Activated CD4-positive, alpha-beta memory T cell treated with anti-CD3 and anti-CD28 coated beads, Interleukin-2, amount 10 ng/mL, durations not matched to agents 7 days and 5 days (primary cell): ENCODE measurements at regions of chr15 and their contacts with region 1.

Region 1: DNA sequence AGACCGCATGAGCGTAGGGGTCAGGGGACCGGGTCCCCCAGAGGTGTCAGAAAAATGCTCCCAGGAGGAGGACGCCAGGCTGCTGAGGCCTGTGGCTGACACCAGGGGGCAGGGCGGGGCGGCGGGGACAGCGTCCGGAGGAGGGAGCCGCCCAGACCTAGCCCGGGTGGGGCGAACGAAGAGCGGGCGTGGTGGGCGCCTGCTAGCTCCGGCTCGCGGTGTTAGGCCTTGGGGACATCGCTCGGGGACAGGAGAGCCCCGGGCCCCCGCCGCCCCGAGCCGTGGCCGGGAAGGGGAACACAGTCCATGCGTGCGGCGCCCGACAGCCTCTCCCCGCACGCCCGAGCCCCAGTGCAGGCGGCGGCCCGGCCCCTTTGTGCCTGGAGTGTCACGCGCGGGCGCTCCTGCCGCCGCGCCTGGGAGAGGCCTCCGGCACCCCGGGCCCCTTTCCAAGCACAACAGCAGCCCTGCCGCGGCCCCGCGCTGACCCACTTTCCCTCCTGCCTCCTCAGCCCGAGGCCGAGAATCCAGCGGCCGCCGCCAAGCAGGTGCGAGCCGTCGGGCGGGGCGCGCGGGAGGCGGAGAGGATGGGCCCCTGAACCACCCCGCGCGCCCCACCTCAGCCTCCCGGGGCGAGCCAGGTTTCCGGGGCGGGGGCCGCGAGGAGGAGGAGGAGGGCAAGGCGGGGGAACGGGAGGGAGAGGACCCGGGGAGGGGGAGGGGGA is 111.0 kb upstream of the KLF13 start:
- DNase-seq: peak; percentile 85
- H3K4me3 Mint-ChIP-seq: peak overlapping the region; percentile 78
- H3K27ac Mint-ChIP-seq: peak overlapping the region; percentile 78
- H3K4me1 Mint-ChIP-seq: peaks cover 47% of the 10 kb centered on the region
- H3K27me3 Mint-ChIP-seq: no peaks in the 10 kb centered on the region

Region 2: DNA sequence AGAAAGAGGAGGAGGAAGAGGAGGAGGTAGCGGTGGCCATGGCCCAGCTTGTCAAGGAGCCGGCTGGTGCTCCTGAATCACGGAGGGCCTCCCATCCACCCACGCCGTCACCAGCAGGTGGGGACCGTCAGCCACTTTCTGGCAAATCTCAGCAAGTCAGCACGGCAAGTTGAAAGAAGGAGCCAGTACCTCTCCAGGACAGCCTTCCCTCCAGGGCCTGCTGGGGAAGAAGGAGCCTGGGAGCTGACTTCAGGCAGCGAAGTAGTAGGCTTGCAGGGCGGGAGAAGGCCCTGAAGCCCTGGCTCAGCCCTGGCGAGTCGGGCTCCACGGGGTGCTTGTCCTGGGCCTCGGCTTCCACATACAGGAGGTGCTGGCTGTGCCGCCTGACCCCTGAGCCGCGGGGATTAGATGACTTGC is 14.9 kb before region 1 on chr15:
- CTCF ChIA-PET with region 1: interaction called, 14 read pairs
- POLR2A ChIA-PET with region 1: interaction called, 7 read pairs
- DNase-seq: peak; percentile 79
- H3K4me3 Mint-ChIP-seq: no peak overlapping the region
- H3K27ac Mint-ChIP-seq: no peak overlapping the region
- H3K4me1 Mint-ChIP-seq: peaks cover 21% of the 10 kb centered on the region
- H3K27me3 Mint-ChIP-seq: peaks cover 21% of the 10 kb centered on the region

Region 3: GRCh38 chr15:31265871-31266711 is 50.4 kb after region 1 on chr15:
- CTCF ChIA-PET with region 1: interaction called, 15 read pairs
- POLR2A ChIA-PET with region 1: interaction called, 62 read pairs
- DNase-seq: peak; percentile 82
- H3K4me3 Mint-ChIP-seq: peak overlapping the region; percentile 22
- H3K27ac Mint-ChIP-seq: peak overlapping the region; percentile 89
- H3K4me1 Mint-ChIP-seq: peaks cover 84% of the 10 kb centered on the region
- H3K27me3 Mint-ChIP-seq: peaks cover 8% of the 10 kb centered on the region